ENCODE measurements at regions of chr11 and their contacts with region 1.

Region 1: DNA sequence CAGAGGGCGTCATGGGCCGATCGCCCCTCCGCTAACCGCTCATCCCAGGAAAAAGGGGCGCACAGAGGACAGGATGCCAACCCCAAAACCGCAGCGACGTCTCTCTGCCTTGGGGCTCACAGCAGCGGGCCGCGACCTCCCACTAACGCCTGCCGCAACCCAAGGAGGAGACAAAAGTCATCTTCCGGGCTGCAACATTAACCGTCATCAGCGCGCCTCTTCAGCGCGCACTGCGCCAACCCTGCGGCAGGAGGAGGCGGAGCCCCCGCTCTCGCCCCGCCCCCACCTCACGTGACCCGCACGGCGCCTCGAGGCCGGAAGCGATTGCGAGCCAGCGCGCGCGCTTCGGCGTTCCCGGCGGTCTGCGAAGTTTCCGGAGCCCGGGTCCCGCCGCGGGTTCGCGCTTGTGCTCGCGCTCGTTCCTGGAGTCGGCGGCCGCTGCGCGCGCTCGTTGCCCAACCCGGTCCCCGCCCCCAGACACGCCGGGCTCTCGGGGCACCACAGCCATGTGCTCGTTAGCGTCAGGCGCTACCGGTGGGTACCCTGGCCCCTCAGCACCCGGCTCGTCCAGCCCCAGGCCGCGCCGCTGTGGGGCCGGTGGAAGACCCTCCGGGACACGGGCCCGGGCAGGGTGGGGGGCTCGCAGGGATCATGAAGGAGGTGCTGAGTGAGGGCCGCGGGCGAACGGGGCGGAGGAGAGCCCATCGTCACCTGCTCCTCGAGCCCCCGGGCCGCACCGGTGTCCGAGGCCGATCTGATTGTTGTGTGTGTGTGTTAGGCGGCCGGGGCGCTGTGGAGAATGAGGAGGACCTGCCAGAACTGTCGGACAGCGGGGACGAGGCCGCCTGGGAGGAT is at the start of gene PRMT3:
- DNase-seq: peak; percentile 97
- H3K4me3 ChIP-seq: peak within 1 kb of the TSS; percentile 63 to 92 (median 80)
- H3K27ac ChIP-seq: peak within 1 kb of the TSS; percentile 86 to 94 (median 90)
- H3K4me1 ChIP-seq: peaks cover 0 to 19% (median 17%) of the 10 kb centered on the region in 4 donors
- H3K27me3 ChIP-seq: no peaks in the 10 kb centered on the region
- CTCF ChIP-seq: peak; percentile 25 to 99 (median 98)
- EP300 ChIP-seq: peak in 1 of 4 donors; percentile 50
- POLR2A ChIP-seq: peak; percentile 61 to 74
- total RNA-seq, gene PRMT3: 15.3 to 18.4 (median 17.6) TPM

Region 2: DNA sequence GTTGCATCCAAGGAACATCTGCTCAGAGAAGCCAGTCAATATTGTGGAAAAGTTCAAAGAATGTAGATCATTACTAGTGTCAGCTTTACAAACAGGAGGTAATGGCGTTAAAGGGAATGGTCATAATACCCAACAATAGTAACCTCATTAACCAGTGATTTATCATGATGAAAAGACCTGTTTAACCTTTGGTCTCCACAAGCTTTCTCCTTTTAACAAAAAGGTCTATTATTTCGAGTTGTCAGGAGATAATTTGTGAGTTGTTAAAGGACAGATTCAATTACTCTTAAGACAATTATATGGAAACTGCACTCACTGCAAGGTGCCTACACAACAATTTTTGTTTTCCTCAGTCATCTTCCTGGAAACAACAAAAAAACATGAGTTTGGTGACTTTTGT is 97.7 kb before region 1 on chr11:
- intact Hi-C with region 1: no loop called
- DNase-seq: no peak
- H3K4me3 ChIP-seq: no peak overlapping the region
- H3K27ac ChIP-seq: no peak overlapping the region
- H3K4me1 ChIP-seq: no peaks in the 10 kb centered on the region
- H3K27me3 ChIP-seq: peaks cover 0 to 3% (median 0%) of the 10 kb centered on the region in 3 donors
- CTCF ChIP-seq: no peak
- EP300 ChIP-seq: no peak
- POLR2A ChIP-seq: no peak

Region 3: DNA sequence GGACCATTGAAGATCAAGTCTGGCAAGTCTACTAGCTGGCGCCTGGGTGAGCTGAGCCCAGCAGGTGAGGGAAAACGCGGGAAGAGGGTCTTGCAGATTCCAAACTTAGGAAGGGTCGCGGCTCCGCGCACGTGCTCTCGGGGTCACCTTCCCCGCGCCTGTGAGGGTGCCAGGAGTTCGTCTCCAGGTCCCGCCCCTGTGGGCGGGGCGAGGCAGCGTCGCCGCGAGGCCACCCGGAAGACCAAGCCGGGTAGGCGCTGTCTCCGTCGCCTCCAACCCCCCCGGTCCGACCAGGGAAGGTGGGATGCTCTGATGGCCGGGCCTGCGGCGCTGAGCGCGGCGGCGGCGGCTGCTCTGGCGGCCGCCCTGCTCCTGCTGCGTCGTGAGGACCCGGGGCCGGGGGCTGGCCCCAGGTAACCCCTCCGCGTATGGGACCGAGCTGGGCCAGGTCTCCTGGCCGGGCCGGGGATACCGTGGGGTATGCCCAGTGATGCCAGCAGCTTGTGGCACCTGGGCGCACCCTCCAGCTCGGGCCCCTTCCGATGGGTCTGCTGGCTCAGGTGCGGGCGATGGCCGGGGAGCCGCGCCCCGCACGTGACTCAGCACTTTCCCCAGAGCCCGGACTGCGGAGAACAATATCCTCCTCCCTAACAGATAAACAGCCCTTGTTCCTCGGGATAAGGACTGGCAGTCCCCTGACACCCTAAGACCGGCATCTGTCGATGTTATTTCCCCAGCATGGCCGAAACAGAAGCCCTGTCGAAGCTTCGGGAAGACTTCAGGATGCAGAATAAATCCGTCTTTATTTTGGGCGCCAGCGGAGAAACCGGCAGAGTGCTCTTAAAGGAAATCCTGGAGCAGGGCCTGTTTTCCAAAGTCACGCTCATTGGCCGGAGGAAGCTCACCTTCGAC is 23.7 kb before region 1 on chr11 and contains the start of gene HTATIP2:
- intact Hi-C with region 1: loop called (anchors 2 kb)
- DNase-seq: peak; percentile 84
- H3K4me3 ChIP-seq: peak within 1 kb of the TSS; percentile 61 to 89 (median 78)
- H3K27ac ChIP-seq: peak within 1 kb of the TSS; percentile 77 to 92 (median 84)
- H3K4me1 ChIP-seq: peaks cover 0 to 46% (median 31%) of the 10 kb centered on the region in 4 donors
- H3K27me3 ChIP-seq: no peaks in the 10 kb centered on the region
- CTCF ChIP-seq: peak in 1 of 4 experiments; percentile 6
- EP300 ChIP-seq: no peak
- POLR2A ChIP-seq: peak in 1 of 2 donors; percentile 14
- total RNA-seq, gene HTATIP2: 12.2 to 58.1 (median 39.5) TPM

Region 4: DNA sequence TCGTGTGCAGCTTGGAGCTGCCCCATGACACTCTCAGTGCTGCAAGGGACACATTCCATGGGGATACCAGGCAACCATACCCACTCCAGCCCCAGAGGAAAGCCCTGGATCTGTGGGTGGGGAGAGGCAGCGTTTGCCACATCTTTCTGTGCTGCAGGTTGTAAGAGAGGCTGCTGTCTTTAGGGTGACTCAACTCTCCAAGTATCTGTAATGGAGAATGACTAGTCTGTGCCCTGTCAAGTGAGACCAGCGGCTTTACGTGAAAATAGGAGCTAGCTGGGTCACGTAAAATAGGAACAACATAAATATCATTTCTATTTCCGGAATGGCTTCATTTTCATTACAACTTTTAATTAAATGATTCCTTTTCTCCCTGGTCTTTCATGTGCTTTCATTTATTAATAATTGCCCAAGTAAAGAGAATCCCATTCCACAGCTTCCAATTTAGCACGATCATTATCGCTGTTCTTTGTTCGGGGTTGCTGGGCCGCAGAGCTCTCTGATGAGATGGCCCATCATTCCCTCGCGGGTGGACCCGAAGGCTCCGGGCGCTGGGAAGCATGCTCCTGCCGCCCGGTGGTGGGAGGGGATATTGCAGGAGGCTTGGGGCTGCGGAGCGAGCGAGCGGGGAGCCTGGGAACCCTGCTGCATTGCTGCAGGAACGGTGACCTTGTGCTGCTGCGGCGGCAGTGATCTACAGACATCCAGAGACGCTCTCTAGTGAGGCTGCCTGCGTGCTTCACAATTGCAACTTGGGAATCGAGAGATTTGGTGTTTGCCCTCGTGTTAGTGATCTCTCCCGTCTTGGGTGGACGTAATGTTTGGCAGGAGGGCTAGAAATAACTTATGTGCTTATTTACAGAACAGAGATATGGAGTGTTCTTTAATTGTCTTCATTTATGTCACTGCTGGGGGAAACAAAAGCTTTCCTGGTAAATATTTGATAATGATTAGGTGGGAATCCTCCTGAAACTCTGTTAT is 222.5 kb after region 1 on chr11:
- intact Hi-C with region 1: loop called (anchors 5 kb)
- DNase-seq: peak; percentile 74
- H3K4me3 ChIP-seq: no peak overlapping the region
- H3K27ac ChIP-seq: no peak overlapping the region
- H3K4me1 ChIP-seq: peaks cover 0 to 7% (median 3%) of the 10 kb centered on the region in 4 donors
- H3K27me3 ChIP-seq: peaks cover 1 to 68% (median 15%) of the 10 kb centered on the region in 3 donors
- CTCF ChIP-seq: peak; percentile 39 to 85 (median 74)
- EP300 ChIP-seq: no peak
- POLR2A ChIP-seq: no peak

Measured in sigmoid colon (tissue), 7 donors.